ENCODE measurements at regions of chr1 and their contacts with region 1.

Region 1: GRCh38 chr1:9629445-9630201 is 21.9 kb upstream of the PIK3CD start:
- DNase-seq: no peak
- H3K4me3 ChIP-seq: no peak overlapping the region
- CTCF ChIP-seq: no peak

Region 2: GRCh38 chr1:9573723-9574122 is 55.9 kb before region 1 on chr1:
- CTCF ChIA-PET with region 1: no interaction called
- POLR2A ChIA-PET with region 1: no interaction called
- DNase-seq: no peak
- H3K4me3 ChIP-seq: no peak overlapping the region
- CTCF ChIP-seq: no peak

Region 3: DNA sequence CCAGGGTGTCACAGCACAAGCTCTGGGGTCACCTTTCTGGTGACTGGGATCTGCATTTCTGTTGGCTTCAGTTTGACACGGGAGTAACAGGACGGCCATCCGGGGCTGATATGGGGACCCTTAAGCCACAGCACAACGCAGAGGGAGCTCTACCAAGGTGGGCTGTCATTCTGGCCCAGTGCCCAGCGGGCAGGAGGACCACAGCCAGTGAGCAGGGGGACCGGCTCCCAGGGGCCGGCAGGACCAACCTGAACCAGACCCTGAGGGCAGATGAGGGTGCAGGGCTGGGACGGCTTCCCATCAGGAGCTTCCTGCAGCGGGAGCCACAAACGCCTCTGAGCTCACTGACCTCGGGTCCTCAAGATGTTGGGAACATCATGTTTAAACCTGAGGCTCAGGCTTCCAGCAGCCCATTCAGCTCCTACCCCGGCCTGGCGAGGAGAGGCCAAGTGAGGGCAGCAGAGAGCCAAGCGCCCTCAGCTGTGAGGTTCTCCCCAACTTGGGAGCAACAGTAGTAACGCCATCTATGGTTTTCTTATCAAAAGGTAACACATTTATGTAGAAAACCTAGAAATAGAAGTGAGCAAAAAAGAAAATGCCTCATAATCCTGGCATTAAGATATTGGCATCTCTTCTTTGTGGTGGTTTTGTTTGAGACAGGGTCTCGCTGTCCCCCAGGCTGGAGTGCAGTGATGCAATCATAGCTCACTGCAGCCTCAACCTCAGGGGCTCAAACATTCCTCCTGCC is 14.1 kb before region 1 on chr1:
- CTCF ChIA-PET with region 1: interaction called, 78 read pairs
- POLR2A ChIA-PET with region 1: no interaction called
- DNase-seq: no peak
- H3K4me3 ChIP-seq: no peak overlapping the region
- CTCF ChIP-seq: peak; percentile 81

Region 4: GRCh38 chr1:9651565-9652378 is 22.1 kb after region 1 on chr1 and contains the start of gene PIK3CD:
- CTCF ChIA-PET with region 1: interaction called, 16 read pairs
- POLR2A ChIA-PET with region 1: no interaction called
- DNase-seq: no peak
- H3K4me3 ChIP-seq: peak within 1 kb of the TSS; percentile 54
- CTCF ChIP-seq: no peak

Region 5: GRCh38 chr1:9705337-9706093 is 75.9 kb after region 1 on chr1:
- CTCF ChIA-PET with region 1: interaction called, 14 read pairs
- POLR2A ChIA-PET with region 1: no interaction called
- DNase-seq: no peak
- H3K4me3 ChIP-seq: no peak overlapping the region
- CTCF ChIP-seq: no peak

Region 6: DNA sequence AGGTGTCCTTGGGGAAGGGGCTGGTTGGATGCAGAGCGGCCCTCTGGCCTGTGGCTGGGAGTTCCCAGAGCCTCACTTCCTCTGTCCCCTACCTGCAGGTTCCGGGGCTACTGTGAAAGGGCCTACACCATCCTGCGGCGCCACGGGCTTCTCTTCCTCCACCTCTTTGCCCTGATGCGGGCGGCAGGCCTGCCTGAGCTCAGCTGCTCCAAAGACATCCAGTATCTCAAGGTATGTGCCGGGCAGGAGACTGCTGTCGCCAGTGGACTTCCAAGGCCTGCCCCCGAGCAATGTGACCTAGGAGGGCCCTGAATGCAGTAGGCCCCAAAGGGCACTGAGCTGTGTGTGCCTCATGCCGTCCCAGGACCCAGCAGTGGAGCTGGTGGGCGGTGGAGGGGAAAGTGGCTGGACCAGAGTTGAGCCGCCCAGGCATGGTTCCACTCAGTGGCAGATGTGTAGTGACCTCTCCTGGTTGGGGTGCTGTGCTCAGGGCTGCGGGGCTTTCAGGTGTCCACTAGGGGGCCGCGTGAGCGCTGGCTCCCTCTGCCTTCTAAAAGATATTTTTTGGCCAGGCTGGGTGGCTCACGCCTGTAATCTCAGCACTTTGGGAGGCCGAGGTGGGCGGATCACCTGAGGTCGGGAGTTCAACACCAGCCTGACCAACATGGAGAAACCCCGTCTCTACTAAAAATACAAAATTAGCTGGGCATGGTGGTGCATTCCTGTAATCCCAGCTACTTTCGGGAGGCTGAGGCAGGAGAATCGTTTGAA is 95.3 kb after region 1 on chr1:
- CTCF ChIA-PET with region 1: interaction called, 34 read pairs
- POLR2A ChIA-PET with region 1: no interaction called
- DNase-seq: no peak
- H3K4me3 ChIP-seq: no peak overlapping the region
- CTCF ChIP-seq: peak; percentile 92

Region 7: DNA sequence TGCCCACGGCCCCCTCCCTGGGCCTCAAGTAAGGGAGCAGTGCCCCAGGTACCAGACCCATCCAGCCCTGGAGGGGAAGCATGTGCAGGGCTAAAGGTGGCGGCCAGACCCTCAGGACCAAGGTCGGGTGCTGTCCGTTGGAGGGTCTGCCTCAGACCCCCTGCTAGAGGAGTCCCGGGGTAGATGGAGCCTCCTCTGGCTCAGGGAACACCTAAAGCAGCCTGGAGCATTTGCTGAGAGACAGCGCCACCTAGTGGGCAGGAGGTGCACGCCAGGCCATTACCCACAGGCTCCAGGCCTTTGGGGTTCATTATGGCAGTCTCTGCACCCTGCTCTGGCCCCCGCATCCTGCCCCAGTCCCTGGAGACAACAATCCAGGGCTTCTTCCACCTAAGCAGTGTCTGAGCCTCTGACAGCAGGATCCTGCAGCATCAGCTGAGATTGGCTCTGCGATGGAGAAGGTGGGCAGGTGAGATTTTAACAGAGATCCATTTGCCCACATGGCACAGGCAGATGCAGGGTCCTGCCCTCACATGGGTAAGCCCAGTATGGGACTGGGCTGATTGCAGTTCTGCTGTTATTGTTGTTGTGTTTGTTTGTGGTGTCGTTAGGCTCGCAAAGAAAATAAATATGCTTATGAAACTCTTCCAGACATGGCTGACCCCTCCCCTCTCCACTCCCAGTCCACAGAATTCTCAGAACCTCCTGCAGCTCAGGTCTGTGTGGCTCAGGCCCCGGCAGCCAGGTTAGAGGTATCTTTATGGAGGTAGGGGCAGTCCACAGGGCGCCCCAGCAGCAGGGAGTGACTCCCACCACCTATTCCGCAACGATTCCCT is 238.0 kb after region 1 on chr1:
- CTCF ChIA-PET with region 1: interaction called, 179 read pairs
- POLR2A ChIA-PET with region 1: no interaction called
- DNase-seq: no peak
- H3K4me3 ChIP-seq: no peak overlapping the region
- CTCF ChIP-seq: peak; percentile 97

Measured in AG04449 (cell line).